ENCODE measurements at regions of chr16 and their contacts with region 1.

Region 1: GRCh38 chr16:12095275-12096156 is 119.0 kb downstream of the SNX29 start:
- DNase-seq: peak; percentile 64
- H3K4me3 ChIP-seq: no peak overlapping the region
- H3K27ac ChIP-seq: no peak overlapping the region
- H3K4me1 ChIP-seq: peaks cover 19% of the 10 kb centered on the region
- H3K27me3 ChIP-seq: no peaks in the 10 kb centered on the region
- CTCF ChIP-seq: peak; percentile 76 to 87
- POLR2A ChIP-seq: no peak

Region 2: GRCh38 chr16:11669380-11670146 is 426.0 kb before region 1 on chr16:
- CTCF ChIA-PET with region 1: no interaction called
- POLR2A ChIA-PET with region 1: no interaction called
- dilution Hi-C with region 1: no loop called
- intact Hi-C with region 1: no loop called
- DNase-seq: peak; percentile 36
- H3K4me3 ChIP-seq: peak overlapping the region in 2 of 3 experiments; percentile 33 to 72
- H3K27ac ChIP-seq: no peak overlapping the region
- H3K4me1 ChIP-seq: peaks cover 16% of the 10 kb centered on the region
- H3K27me3 ChIP-seq: no peaks in the 10 kb centered on the region
- CTCF ChIP-seq: no peak
- POLR2A ChIP-seq: peak; percentile 12

Region 3: DNA sequence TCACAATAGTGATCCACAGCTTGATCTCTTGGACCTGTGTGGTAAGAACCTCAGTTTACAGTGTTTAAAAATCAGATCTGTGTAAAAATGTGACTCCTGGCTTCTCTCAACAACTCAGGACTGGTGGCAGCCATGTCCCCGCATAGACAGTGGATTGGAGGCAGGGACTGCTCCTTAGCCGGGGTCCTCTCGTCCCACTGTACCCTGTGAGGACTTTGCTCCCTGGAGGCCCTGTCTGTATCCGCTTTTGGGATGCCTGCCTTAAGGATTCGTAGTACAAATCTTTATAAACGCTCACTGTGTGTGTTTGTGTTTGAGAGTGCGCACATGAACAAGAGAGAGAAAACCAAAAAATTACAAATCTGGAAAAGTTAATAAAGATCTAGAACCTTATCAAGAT is 23.5 kb after region 1 on chr16:
- CTCF ChIA-PET with region 1: no interaction called
- POLR2A ChIA-PET with region 1: no interaction called
- dilution Hi-C with region 1: no loop called
- intact Hi-C with region 1: no loop called
- DNase-seq: no peak
- H3K4me3 ChIP-seq: no peak overlapping the region
- H3K27ac ChIP-seq: no peak overlapping the region
- H3K4me1 ChIP-seq: no peaks in the 10 kb centered on the region
- H3K27me3 ChIP-seq: no peaks in the 10 kb centered on the region
- CTCF ChIP-seq: no peak
- POLR2A ChIP-seq: no peak

Region 4: DNA sequence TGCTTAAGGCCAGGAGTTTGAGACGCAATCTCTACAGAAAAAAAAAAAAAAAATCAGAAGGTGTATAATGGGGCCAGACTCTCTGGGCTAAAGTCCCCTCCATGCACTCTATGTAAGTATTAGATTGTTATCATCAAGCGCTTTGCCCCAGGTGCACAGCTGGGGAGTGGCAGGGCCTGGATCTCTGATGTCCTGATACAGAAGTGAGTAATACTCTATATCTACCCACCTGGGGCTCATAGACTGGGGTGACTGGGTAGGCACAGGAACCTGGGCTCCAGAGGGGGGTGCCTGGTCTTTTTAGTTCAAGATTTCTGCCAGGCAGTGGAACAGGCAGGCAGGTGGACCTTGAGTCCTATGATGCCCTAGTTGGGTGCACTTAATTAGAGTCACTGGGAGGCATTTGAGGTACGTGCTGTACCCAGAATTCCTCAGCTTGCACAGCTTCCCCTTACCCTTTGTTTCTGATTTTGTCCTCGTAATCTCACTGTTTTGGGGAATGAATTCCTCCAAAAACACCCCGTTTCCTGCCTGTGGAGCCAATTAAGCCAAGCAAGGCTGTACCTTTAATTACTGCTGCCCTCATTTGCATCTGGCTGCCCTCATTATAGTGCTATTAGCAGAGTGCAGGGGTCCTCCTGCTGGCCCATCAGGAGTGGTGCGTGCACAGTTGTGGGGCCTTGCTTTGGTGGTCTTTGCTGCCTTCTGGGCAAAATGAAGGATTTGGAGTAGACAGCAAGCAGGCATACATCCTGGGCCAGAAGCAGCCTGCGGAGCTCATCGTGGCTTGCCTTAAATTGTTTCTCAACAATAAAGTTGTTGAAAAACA is 120.0 kb after region 1 on chr16:
- CTCF ChIA-PET with region 1: interaction called, 3 read pairs
- POLR2A ChIA-PET with region 1: no interaction called
- dilution Hi-C with region 1: no loop called
- intact Hi-C with region 1: loop called (anchors 1 kb)
- DNase-seq: no peak
- H3K4me3 ChIP-seq: no peak overlapping the region
- H3K27ac ChIP-seq: no peak overlapping the region
- H3K4me1 ChIP-seq: no peaks in the 10 kb centered on the region
- H3K27me3 ChIP-seq: no peaks in the 10 kb centered on the region
- CTCF ChIP-seq: peak; percentile 6 to 24
- POLR2A ChIP-seq: no peak

Region 5: DNA sequence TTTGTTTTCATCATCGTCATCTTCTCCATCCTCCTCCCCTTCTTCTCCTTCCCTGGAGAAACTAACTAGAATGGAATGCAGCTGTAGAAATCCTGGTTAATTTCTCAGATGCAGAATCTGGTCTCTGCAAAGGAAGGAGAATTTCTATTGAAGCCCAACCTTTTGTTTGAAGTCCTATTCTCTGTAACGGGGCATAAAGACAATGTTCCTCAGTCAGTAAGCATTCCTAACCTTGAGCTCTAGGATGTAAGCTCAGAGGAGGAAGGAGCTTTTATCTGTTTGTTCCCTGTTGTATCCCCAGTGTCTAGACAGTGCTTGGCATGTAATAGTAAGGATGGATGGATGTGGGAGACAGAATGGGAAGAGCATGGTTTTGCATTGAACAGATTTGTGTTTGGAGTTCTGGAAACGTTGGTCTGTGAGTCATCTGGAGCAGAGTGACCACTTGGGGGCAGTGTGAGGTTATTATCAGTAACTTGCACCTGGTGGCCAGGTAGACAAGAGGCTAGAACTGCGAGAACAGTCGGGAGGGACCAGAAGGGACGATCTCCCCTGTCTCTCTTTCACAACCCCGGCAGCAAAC is 244.7 kb after region 1 on chr16:
- CTCF ChIA-PET with region 1: interaction called, 22 read pairs
- POLR2A ChIA-PET with region 1: no interaction called
- dilution Hi-C with region 1: no loop called
- intact Hi-C with region 1: loop called (anchors 1 kb)
- DNase-seq: peak; percentile 47
- H3K4me3 ChIP-seq: no peak overlapping the region
- H3K27ac ChIP-seq: no peak overlapping the region
- H3K4me1 ChIP-seq: peaks cover 17% of the 10 kb centered on the region
- H3K27me3 ChIP-seq: no peaks in the 10 kb centered on the region
- CTCF ChIP-seq: peak; percentile 45 to 46
- POLR2A ChIP-seq: no peak

Region 6: GRCh38 chr16:12455287-12455798 is 359.8 kb after region 1 on chr16:
- CTCF ChIA-PET with region 1: interaction called, 14 read pairs
- POLR2A ChIA-PET with region 1: no interaction called
- dilution Hi-C with region 1: no loop called
- intact Hi-C with region 1: loop called (anchors 1 kb)
- DNase-seq: peak; percentile 53
- H3K4me3 ChIP-seq: no peak overlapping the region
- H3K27ac ChIP-seq: no peak overlapping the region
- H3K4me1 ChIP-seq: no peaks in the 10 kb centered on the region
- H3K27me3 ChIP-seq: no peaks in the 10 kb centered on the region
- CTCF ChIP-seq: peak; percentile 87 to 94
- POLR2A ChIP-seq: no peak

Region 7: GRCh38 chr16:12803203-12804097 is 707.9 kb after region 1 on chr16 and contains the start of gene CPPED1:
- CTCF ChIA-PET with region 1: interaction called, 3 read pairs
- POLR2A ChIA-PET with region 1: no interaction called
- dilution Hi-C with region 1: no loop called
- intact Hi-C with region 1: loop called (anchors 5 kb)
- DNase-seq: peak; percentile 91
- H3K4me3 ChIP-seq: peak within 1 kb of the TSS; percentile 35 to 89 (median 76)
- H3K27ac ChIP-seq: peak within 1 kb of the TSS; percentile 99
- H3K4me1 ChIP-seq: peaks cover 26% of the 10 kb centered on the region
- H3K27me3 ChIP-seq: no peaks in the 10 kb centered on the region
- CTCF ChIP-seq: no peak
- POLR2A ChIP-seq: peak; percentile 55
- total RNA-seq, gene CPPED1: 55.8 and 59.3 TPM in 2 replicates

Measured in endothelial cell of umbilical vein (primary cell).